Mucosa of descending colon (tissue), 3 donors: ENCODE measurements at regions of chr2 and their contacts with region 1.

Region 1: GRCh38 chr2:176643646-176644045 is 374.4 kb downstream of the MTX2 start:
- DNase-seq: no peak
- ATAC-seq: no peak
- H3K4me3 ChIP-seq: no peak overlapping the region
- H3K4me1 ChIP-seq: no peaks in the 10 kb centered on the region
- CTCF ChIP-seq: no peak

Region 2: GRCh38 chr2:176454893-176455811 is 188.5 kb before region 1 on chr2:
- intact Hi-C with region 1: loop called in 1 of 2 experiments (anchors 10 kb)
- DNase-seq: peak; percentile 70 to 98 (median 88)
- ATAC-seq: peak; percentile 90
- H3K4me3 ChIP-seq: no peak overlapping the region
- H3K4me1 ChIP-seq: no peaks in the 10 kb centered on the region
- CTCF ChIP-seq: peak; percentile 80

Region 3: DNA sequence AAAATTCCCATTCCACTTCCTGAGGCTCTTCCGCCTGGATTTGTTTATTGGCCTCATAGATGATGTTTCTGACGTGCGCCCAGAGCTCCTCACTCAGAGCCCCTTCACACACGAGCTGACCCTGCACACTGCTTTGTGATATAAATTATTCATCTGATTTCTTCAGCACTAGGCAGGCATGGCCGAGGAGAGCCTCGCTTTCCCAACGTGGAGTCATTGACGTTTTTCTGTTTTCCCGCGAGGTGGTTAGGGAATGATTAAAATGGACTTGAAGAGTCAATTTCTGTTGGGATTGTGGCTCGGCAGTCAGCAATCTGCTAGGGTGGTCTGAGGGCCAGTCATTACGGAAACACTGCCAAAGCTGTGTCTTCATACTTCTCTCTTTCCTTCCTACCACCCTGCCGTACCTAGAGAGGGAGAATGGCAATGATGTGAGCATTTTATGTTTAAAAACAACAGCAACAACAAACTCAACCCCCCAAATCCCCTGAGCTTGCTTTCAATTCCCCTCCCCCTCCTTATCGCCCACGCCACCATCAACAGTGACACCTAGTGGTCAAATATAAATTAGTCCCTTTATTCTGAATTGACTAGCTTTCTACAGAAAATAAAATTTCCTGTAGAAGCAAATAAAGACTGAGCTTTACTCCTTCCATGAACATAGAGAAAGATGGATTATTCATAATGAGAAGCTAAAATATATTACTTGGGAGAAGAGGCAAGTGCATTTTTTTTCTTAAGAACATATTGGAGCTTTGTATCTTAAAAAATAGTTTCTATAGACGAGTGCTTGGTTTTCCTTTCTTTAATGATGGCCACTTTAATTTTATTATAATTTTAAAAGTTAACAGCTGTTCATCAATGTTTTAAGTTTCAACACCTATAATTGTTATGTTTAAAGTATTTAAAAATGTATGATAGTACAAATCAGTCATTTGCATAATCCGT is 89.3 kb before region 1 on chr2:
- intact Hi-C with region 1: loop called in 1 of 2 experiments (anchors 10 kb)
- DNase-seq: peak in 1 of 3 donors; percentile 33
- ATAC-seq: peak; percentile 80
- H3K4me3 ChIP-seq: no peak overlapping the region
- H3K4me1 ChIP-seq: no peaks in the 10 kb centered on the region
- CTCF ChIP-seq: peak; percentile 54

Region 4: GRCh38 chr2:176781570-176782217 is 138.0 kb after region 1 on chr2:
- intact Hi-C with region 1: no loop called
- DNase-seq: no peak
- ATAC-seq: no peak
- H3K4me3 ChIP-seq: no peak overlapping the region
- H3K4me1 ChIP-seq: no peaks in the 10 kb centered on the region
- CTCF ChIP-seq: no peak